B cell (primary cell): ENCODE measurements at regions of chr19 and their contacts with region 1.

Region 1: DNA sequence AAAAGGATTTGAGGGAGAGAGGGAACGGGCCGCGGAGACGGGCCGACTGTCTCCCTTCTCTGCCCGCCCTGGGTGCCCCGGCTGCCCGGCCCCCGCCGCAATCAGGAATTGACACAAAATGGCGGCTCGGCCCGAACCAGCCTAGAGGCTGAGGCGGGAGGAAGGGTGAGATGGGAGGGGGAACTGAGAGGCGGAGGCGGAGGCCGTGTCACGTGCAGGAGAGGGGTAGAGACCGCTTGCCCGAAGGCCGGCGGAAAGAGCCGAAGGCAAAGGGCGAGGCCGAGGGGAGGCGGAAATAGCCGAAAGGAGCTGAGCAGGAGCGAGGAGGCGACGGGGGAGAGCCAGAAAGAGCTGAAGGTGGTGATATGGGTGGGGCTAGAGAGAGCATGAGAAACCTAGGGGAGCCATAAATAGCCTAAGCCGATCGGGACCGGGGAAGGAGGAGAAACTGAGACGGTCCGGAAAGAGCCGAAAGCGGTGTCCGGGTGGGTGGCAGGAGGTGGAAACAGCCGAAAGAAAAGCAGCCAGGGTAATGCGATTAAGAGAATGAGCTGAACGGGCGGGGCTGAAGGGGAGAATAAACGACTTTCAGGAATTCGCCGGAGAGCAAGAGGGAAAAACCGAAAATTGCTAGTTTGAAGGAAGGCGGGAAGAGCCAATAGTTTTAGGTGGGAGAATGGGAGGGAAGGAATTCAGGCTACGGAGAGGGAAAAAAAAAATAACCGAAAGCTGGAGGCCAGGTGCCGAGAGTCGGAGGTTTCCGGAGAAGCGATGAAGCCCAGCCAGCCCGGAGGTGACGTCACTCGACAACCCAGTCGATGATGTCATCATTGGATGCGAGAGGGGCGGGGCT is at the start of gene ZC3H4:
- DNase-seq: peak; percentile 99
- ATAC-seq: peak; percentile 76
- H3K4me3 ChIP-seq: peak within 1 kb of the TSS; percentile 85 to 99 (median 98)
- H3K4me3 Mint-ChIP-seq: peak within 1 kb of the TSS; percentile 88
- H3K27ac ChIP-seq: peak within 1 kb of the TSS; percentile 96 to 100
- H3K27ac Mint-ChIP-seq: peak within 1 kb of the TSS; percentile 99
- H3K4me1 ChIP-seq: peaks cover 25 to 30% of the 10 kb centered on the region in 2 donors
- H3K4me1 Mint-ChIP-seq: peaks cover 31% of the 10 kb centered on the region
- H3K27me3 ChIP-seq: no peaks in the 10 kb centered on the region
- H3K27me3 Mint-ChIP-seq: no peaks in the 10 kb centered on the region
- CTCF ChIP-seq: no peak
- total RNA-seq, gene ZC3H4: 66.9 and 73.7 TPM in 2 replicates

Region 2: GRCh38 chr19:46821498-46822409 is 291.5 kb before region 1 on chr19:
- CTCF ChIA-PET with region 1: no interaction called
- POLR2A ChIA-PET with region 1: no interaction called
- intact Hi-C with region 1: loop called (anchors 1 kb)
- DNase-seq: peak; percentile 85
- ATAC-seq: peak; percentile 66
- H3K4me3 ChIP-seq: peak overlapping the region in 3 of 5 experiments; percentile 23 to 51 (median 29)
- H3K4me3 Mint-ChIP-seq: peak overlapping the region; percentile 69
- H3K27ac ChIP-seq: peak overlapping the region; percentile 79
- H3K27ac Mint-ChIP-seq: peak overlapping the region; percentile 92
- H3K4me1 ChIP-seq: peaks cover 60 to 73% of the 10 kb centered on the region in 2 donors
- H3K4me1 Mint-ChIP-seq: peaks cover 52% of the 10 kb centered on the region
- H3K27me3 ChIP-seq: no peaks in the 10 kb centered on the region
- H3K27me3 Mint-ChIP-seq: no peaks in the 10 kb centered on the region
- CTCF ChIP-seq: no peak

Region 3: DNA sequence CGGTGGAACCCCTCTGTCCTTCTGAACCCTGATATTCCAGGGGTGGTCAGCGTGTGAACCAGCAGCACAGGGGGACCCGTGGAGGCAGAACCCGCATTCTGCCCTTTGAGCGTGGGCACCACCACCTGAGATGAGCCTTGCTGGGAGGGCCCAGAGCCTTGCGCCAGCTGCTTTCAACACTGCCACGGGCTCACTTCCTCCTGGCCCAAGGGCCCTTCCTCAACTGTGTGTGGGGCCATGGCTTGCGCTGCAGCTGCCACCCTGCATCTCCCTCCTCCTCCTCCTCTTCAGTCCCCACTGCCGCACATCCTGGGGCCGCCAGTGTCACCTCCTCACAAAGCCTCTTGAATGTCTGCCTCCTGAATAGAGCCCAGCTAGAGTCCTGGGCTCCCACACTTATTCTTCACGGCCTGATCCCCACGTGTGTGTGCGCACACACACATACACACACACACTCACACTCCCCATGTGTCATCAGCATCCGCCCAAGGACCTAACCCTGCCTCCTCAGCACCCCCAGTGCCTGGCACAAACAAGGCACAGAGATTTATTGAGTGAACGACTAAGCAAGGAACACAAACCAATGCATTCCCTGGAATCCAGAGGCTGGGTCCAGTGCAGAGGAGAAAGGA is 37.9 kb before region 1 on chr19:
- CTCF ChIA-PET with region 1: interaction called, 26 read pairs
- POLR2A ChIA-PET with region 1: interaction called, 3 read pairs
- intact Hi-C with region 1: loop called (anchors 5 kb)
- DNase-seq: no peak
- ATAC-seq: no peak
- H3K4me3 ChIP-seq: no peak overlapping the region
- H3K4me3 Mint-ChIP-seq: no peak overlapping the region
- H3K27ac ChIP-seq: no peak overlapping the region
- H3K27ac Mint-ChIP-seq: peak overlapping the region; percentile 54
- H3K4me1 ChIP-seq: no peaks in the 10 kb centered on the region
- H3K4me1 Mint-ChIP-seq: peaks cover 4% of the 10 kb centered on the region
- H3K27me3 ChIP-seq: no peaks in the 10 kb centered on the region
- H3K27me3 Mint-ChIP-seq: no peaks in the 10 kb centered on the region
- CTCF ChIP-seq: no peak

Region 4: DNA sequence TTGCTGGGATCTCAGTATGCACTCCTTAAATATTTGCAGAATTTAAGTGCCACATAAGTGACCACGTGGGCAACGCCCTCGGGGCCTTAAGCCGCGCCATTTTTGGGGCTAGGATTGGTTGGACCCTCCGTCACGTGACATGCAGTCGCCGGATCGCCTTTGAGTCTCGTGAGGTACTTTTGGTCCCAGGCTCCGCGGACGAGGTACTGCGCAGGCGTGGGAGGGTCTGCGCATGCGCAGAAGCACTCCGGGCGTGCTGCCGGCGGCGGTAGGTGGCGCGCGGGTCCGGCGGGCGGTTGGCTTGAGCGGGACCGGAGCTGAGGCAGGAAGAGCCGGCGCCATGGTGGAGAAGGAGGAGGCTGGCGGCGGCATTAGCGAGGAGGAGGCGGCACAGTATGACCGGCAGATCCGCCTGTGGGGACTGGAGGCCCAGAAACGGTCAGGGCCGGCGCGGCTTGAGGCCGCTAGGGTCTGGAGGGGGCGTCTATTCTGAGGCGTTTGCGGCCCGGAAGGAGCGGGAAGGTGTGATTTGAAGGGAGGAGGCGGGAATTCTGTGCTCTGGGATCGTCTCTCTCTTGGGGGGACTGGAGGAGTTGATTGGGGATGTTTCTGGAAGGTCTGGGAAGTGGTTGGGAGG is 17.5 kb after region 1 on chr19 and contains the start of gene SAE1:
- CTCF ChIA-PET with region 1: interaction called, 29 read pairs
- POLR2A ChIA-PET with region 1: interaction called, 18 read pairs
- intact Hi-C with region 1: loop called (anchors 1 kb)
- DNase-seq: peak; percentile 97
- ATAC-seq: peak; percentile 89
- H3K4me3 ChIP-seq: peak within 1 kb of the TSS; percentile 50 to 98 (median 88)
- H3K4me3 Mint-ChIP-seq: peak within 1 kb of the TSS; percentile 97
- H3K27ac ChIP-seq: peak within 1 kb of the TSS; percentile 76 to 89
- H3K27ac Mint-ChIP-seq: peak within 1 kb of the TSS; percentile 98
- H3K4me1 ChIP-seq: peaks cover 0 to 21% of the 10 kb centered on the region in 2 donors
- H3K4me1 Mint-ChIP-seq: peaks cover 39% of the 10 kb centered on the region
- H3K27me3 ChIP-seq: no peaks in the 10 kb centered on the region
- H3K27me3 Mint-ChIP-seq: no peaks in the 10 kb centered on the region
- CTCF ChIP-seq: peak; percentile 65
- total RNA-seq, gene SAE1: 41.0 and 45.1 TPM in 2 replicates

Region 5: DNA sequence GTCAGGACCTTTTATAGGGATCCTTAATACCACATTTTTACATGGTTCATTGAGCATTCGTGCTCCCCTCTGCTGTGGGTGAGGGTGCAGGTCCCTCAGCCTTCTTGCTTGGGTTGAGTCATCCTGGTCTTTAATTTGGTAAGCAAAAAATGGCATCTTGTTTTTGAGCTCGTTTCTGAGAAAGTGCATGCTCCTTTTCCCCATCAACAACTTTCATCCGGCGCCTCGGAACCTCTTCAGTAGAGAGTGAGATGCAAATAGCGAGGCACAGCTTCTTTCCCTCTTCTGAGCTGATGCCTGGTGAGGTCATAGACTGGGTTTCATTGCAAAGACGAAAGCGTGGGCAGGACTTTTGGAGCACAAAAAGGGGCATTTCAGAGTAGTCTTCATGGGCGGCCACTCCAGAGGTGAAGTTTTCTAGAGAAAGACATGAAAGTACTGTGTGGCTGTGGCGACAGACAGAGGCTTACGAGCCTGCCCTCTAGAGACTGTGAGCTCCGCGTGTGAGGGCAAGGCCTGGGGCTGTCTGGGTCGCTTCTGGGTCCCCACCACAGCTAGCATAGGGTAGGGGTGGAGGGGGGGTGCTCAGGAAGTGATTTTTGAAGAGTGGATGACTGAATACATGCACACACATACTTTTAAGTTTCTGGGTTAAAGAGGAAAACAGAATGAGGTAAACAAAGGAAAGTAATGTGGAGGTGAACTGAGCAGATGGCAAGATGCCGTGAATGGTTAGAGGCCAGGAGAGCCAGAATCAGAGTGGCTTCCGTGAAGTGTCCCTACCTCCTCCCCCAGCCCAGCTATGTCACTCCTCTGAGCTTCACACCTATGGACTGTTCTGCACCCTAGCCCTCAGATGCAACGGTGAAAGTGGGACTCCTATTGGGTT is 73.5 kb after region 1 on chr19:
- CTCF ChIA-PET with region 1: no interaction called
- POLR2A ChIA-PET with region 1: no interaction called
- intact Hi-C with region 1: no loop called
- DNase-seq: peak; percentile 45
- ATAC-seq: peak; percentile 78
- H3K4me3 ChIP-seq: peak overlapping the region in 1 of 5 experiments; percentile 14
- H3K4me3 Mint-ChIP-seq: peak overlapping the region; percentile 72
- H3K27ac ChIP-seq: peak overlapping the region; percentile 41 to 62
- H3K27ac Mint-ChIP-seq: peak overlapping the region; percentile 89
- H3K4me1 ChIP-seq: peaks cover 3 to 12% of the 10 kb centered on the region in 2 donors
- H3K4me1 Mint-ChIP-seq: peaks cover 19% of the 10 kb centered on the region
- H3K27me3 ChIP-seq: no peaks in the 10 kb centered on the region
- H3K27me3 Mint-ChIP-seq: no peaks in the 10 kb centered on the region
- CTCF ChIP-seq: no peak

Region 6: DNA sequence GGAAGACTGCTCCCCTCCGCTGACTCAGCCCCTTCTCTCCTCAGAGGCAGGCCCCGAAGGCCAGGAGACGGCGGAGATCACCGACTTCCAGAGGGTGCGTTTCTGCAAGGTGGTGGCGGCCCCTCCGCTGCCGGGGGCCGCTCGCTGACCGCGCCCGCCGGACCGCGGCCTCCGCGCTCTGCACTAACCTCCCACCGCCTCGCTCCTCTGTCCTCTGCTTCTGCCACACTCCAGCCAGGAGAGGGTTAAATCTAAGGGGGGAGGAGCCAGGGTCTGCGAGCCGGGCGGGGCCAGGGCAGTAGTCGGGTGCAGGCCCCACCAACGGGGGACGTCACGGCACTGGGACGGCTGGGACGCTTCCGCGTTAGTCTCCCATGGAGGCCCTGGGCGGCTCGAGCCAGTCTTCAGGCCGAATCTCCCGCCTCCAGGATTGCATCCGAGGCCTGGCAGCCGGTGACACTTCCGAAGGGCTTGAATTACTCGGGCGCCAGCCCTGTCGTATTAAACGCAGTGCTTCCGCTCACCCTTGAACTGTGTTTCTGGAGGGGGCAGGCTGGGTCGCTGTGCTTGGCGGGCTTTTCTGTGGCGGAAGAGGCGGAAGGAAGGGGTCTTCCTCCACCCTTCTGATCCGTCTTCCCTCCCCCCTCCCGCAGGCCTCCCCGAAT is 160.2 kb after region 1 on chr19:
- CTCF ChIA-PET with region 1: no interaction called
- POLR2A ChIA-PET with region 1: interaction called, 4 read pairs
- intact Hi-C with region 1: loop called (anchors 2 kb)
- DNase-seq: peak; percentile 91
- ATAC-seq: peak; percentile 56
- H3K4me3 ChIP-seq: peak overlapping the region; percentile 54 to 99 (median 96)
- H3K4me3 Mint-ChIP-seq: peak overlapping the region; percentile 97
- H3K27ac ChIP-seq: peak overlapping the region; percentile 94 to 98
- H3K27ac Mint-ChIP-seq: peak overlapping the region; percentile 99
- H3K4me1 ChIP-seq: peaks cover 12 to 22% of the 10 kb centered on the region in 2 donors
- H3K4me1 Mint-ChIP-seq: peaks cover 22% of the 10 kb centered on the region
- H3K27me3 ChIP-seq: no peaks in the 10 kb centered on the region
- H3K27me3 Mint-ChIP-seq: no peaks in the 10 kb centered on the region
- CTCF ChIP-seq: no peak